GM12878 (cell line): ENCODE measurements at regions of chr16 and their contacts with region 1.

Region 1: GRCh38 chr16:67084345-67085028 is 25.3 kb upstream of the PHAF1 start:
- DNase-seq: no peak
- ATAC-seq: peak; percentile 96
- H3K4me3 ChIP-seq: no peak overlapping the region
- H3K27ac ChIP-seq: no peak overlapping the region; the same call in 1 of the 2 replicates
- H3K4me1 ChIP-seq: peaks cover 26% of the 10 kb centered on the region
- H3K27me3 ChIP-seq: no peaks in the 10 kb centered on the region
- CTCF ChIP-seq: no peak
- EP300 ChIP-seq: no peak
- POLR2A ChIP-seq: no peak
- RAD21 ChIP-seq: no peak

Region 2: GRCh38 chr16:66961065-66961744 is 123.3 kb before region 1 on chr16 and contains the start of gene CES3:
- CTCF ChIA-PET with region 1: no interaction called
- POLR2A ChIA-PET with region 1: no interaction called
- RAD21 ChIA-PET with region 1: no interaction called
- SMC1A ChIA-PET with region 1: no interaction called
- in situ Hi-C with region 1: no loop called
- intact Hi-C with region 1: no loop called
- DNase-seq: no peak
- ATAC-seq: peak; percentile 99
- H3K4me3 ChIP-seq: no peak within 1 kb of the TSS; the same call in 1 of the 2 replicates
- H3K27ac ChIP-seq: no peak within 1 kb of the TSS
- H3K4me1 ChIP-seq: peaks cover 11% of the 10 kb centered on the region
- H3K27me3 ChIP-seq: no peaks in the 10 kb centered on the region
- CTCF ChIP-seq: peak; percentile 79 to 91 (median 86)
- EP300 ChIP-seq: no peak
- POLR2A ChIP-seq: no peak
- RAD21 ChIP-seq: peak; percentile 17; the same call in 1 of the 2 replicates
- polyA plus RNA-seq, gene CES3: 0.09 to 0.18 TPM

Region 3: GRCh38 chr16:67063008-67063407 is 21.5 kb before region 1 on chr16:
- CTCF ChIA-PET with region 1: interaction called, 5 read pairs
- POLR2A ChIA-PET with region 1: interaction called, 3 read pairs
- RAD21 ChIA-PET with region 1: no interaction called
- SMC1A ChIA-PET with region 1: interaction called, 6 read pairs
- in situ Hi-C with region 1: no loop called
- intact Hi-C with region 1: loop called (anchors 1 kb)
- DNase-seq: no peak
- ATAC-seq: peak; percentile 72
- H3K4me3 ChIP-seq: no peak overlapping the region
- H3K27ac ChIP-seq: peak overlapping the region; percentile 76
- H3K4me1 ChIP-seq: peaks cover 16% of the 10 kb centered on the region
- H3K27me3 ChIP-seq: no peaks in the 10 kb centered on the region
- CTCF ChIP-seq: no peak
- EP300 ChIP-seq: no peak
- POLR2A ChIP-seq: no peak
- RAD21 ChIP-seq: no peak